Posterior vena cava (tissue), 2 donors: ENCODE measurements at regions of chr16 and their contacts with region 1.

Region 1: GRCh38 chr16:29961479-29962343 is at the start of gene TMEM219:
- DNase-seq: peak; percentile 96
- total RNA-seq, gene TMEM219: 58.4 to 80.9 TPM

Region 2: DNA sequence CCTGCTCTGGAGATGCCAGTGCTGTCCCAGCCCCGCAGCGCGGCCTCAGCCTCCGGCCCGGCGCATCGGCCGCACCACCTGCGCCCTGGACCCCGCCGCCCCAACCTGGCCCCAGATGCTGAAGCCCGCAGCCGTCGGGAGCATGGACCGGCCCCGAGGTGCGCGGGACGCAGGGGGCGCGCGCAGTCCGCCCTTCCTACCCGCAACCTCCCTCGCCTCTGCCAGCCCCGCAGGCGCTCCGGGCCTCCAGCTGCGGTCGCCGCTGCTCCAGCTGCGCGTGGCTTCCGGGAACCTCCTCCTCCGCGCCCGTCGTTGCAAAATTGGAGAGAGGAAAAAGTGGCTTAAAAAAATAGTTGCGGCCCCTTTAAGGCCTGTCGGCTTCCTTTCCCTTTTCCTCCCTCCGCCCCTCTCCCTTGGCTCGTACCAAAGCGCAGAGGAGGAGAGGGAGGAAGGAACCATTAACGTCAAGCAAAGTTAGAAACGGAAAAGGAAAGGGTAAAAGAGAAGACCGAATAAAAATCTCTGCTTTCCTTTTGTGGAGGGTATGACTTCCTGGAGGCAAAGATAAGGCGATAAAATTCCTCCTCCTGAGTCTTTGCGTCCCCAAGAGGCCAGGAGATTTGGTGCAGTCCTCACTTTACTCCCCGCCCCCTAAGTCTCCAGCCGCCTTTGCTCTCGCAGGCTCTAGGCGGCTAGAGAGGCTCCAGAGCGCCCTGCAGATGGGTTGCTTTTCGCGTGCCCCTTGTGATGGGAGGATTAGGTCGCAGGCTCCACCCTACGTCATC is 98.6 kb before region 1 on chr16 and contains the start of gene CDIPT:
- intact Hi-C with region 1: loop called in 1 of 2 experiments (anchors 5 kb)
- DNase-seq: peak; percentile 97
- total RNA-seq, gene CDIPT: 54.6 to 75.6 TPM

Region 3: GRCh38 chr16:29926005-29926710 is 35.6 kb before region 1 on chr16 and contains the start of gene KCTD13:
- intact Hi-C with region 1: loop called in 1 of 2 experiments (anchors 5 kb)
- DNase-seq: peak; percentile 95
- total RNA-seq, gene KCTD13: 13.1 to 16.1 TPM